A549 (cell line): ENCODE measurements at regions of chr10 and their contacts with region 1.

Region 1: DNA sequence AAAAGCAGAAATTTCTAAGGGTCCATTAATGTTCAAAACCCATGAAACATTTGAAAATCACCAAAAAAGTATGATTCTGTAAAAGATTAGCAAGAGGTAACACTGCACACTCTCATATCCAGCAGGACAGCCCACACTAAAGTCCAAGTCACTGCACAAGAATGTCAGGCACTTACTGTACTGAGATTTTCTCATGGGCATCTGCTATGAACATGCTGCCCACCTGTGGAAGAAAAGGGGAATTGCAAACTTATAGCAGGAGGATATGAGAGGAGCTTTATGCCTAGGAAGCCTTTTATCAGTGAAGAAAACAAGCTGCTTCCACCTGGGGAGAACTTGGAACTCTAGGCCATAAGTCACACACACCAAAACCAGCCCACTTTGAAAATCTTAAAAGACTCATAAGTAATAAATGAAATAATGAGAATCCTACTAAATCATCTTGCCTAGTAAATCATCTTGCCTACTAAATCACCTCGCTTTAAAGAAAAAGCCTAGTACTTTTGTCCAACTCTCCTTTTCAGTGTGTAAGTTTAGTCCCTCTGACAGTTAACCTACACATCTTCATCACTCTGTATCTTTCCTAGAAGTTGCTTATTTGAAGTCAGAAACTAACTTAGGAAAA is 46.1 kb downstream of the ARMH3 start:
- DNase-seq: peak; percentile 86 to 88
- ATAC-seq: peak; percentile 98 to 99
- H3K4me3 ChIP-seq: no peak overlapping the region
- H3K27ac ChIP-seq: peak overlapping the region in 1 of 2 experiments; percentile 36; a peak in 2 of 6 replicates
- H3K4me1 ChIP-seq: peaks cover 6% of the 10 kb centered on the region
- CTCF ChIP-seq: peak; percentile 98
- EP300 ChIP-seq: no peak
- POLR2A ChIP-seq: no peak
- RAD21 ChIP-seq: peak; percentile 97 to 99

Region 2: GRCh38 chr10:101840741-101841453 is 169.0 kb before region 1 on chr10:
- CTCF ChIA-PET with region 1: interaction called, 379 read pairs
- POLR2A ChIA-PET with region 1: interaction called, 8 read pairs
- DNase-seq: peak; percentile 83 to 86
- ATAC-seq: peak; percentile 78 to 90
- H3K4me3 ChIP-seq: peak overlapping the region; percentile 38; the same call in 1 of the 3 replicates
- H3K27ac ChIP-seq: peak overlapping the region in 1 of 2 experiments; percentile 77; a peak in 3 of 6 replicates
- H3K4me1 ChIP-seq: peaks cover 20% of the 10 kb centered on the region
- CTCF ChIP-seq: peak; percentile 96
- EP300 ChIP-seq: no peak
- POLR2A ChIP-seq: no peak
- RAD21 ChIP-seq: peak; percentile 87 to 95

Region 3: GRCh38 chr10:101897633-101898032 is 112.3 kb before region 1 on chr10:
- CTCF ChIA-PET with region 1: interaction called, 211 read pairs
- POLR2A ChIA-PET with region 1: no interaction called
- DNase-seq: no peak
- ATAC-seq: peak in 1 of 2 experiments; percentile 59; a peak in 3 of 6 replicates
- H3K4me3 ChIP-seq: no peak overlapping the region
- H3K27ac ChIP-seq: no peak overlapping the region
- H3K4me1 ChIP-seq: peaks cover 23% of the 10 kb centered on the region
- CTCF ChIP-seq: no peak
- EP300 ChIP-seq: no peak
- POLR2A ChIP-seq: no peak
- RAD21 ChIP-seq: no peak

Region 4: GRCh38 chr10:101961591-101962498 is 48.1 kb before region 1 on chr10:
- CTCF ChIA-PET with region 1: interaction called, 17 read pairs
- POLR2A ChIA-PET with region 1: no interaction called
- DNase-seq: no peak
- ATAC-seq: peak; percentile 25 to 70; a peak in 4 of 6 replicates
- H3K4me3 ChIP-seq: no peak overlapping the region
- H3K27ac ChIP-seq: peak overlapping the region in 1 of 2 experiments; percentile 4; a peak in 1 of 6 replicates
- H3K4me1 ChIP-seq: peaks cover 10% of the 10 kb centered on the region; the same call in 2 of the 3 replicates
- CTCF ChIP-seq: no peak
- EP300 ChIP-seq: no peak
- POLR2A ChIP-seq: no peak
- RAD21 ChIP-seq: no peak

Region 5: GRCh38 chr10:101995451-101996063 is 14.4 kb before region 1 on chr10:
- CTCF ChIA-PET with region 1: interaction called, 50 read pairs
- POLR2A ChIA-PET with region 1: no interaction called
- DNase-seq: no peak
- ATAC-seq: peak in 1 of 2 experiments; percentile 46; a peak in 3 of 6 replicates
- H3K4me3 ChIP-seq: no peak overlapping the region
- H3K27ac ChIP-seq: peak overlapping the region in 1 of 2 experiments; percentile 34; a peak in 2 of 6 replicates
- H3K4me1 ChIP-seq: peaks cover 17% of the 10 kb centered on the region
- CTCF ChIP-seq: no peak
- EP300 ChIP-seq: no peak
- POLR2A ChIP-seq: no peak
- RAD21 ChIP-seq: no peak

Region 6: GRCh38 chr10:102045292-102045691 is 35.4 kb after region 1 on chr10:
- CTCF ChIA-PET with region 1: interaction called, 14 read pairs
- POLR2A ChIA-PET with region 1: no interaction called
- DNase-seq: no peak
- ATAC-seq: no peak
- H3K4me3 ChIP-seq: no peak overlapping the region
- H3K27ac ChIP-seq: no peak overlapping the region
- H3K4me1 ChIP-seq: no peaks in the 10 kb centered on the region
- CTCF ChIP-seq: no peak
- EP300 ChIP-seq: no peak
- POLR2A ChIP-seq: no peak
- RAD21 ChIP-seq: no peak